ENCODE measurements at regions of chr10 and their contacts with region 1.

Region 1: GRCh38 chr10:67788025-67788886 is 49.7 kb downstream of the DNAJC12 start:
- DNase-seq: peak; percentile 14 to 74 (median 54)
- ATAC-seq: peak; percentile 64 to 79 (median 72)
- H3K4me3 ChIP-seq: no peak overlapping the region
- H3K4me3 Mint-ChIP-seq: peak overlapping the region in 2 of 3 donors; percentile 14 to 45
- H3K27ac ChIP-seq: no peak overlapping the region
- H3K27ac Mint-ChIP-seq: no peak overlapping the region
- H3K4me1 ChIP-seq: peaks cover 0 to 9% of the 10 kb centered on the region in 2 experiments
- H3K4me1 Mint-ChIP-seq: peaks cover 25 to 40% (median 26%) of the 10 kb centered on the region in 3 donors
- H3K27me3 ChIP-seq: no peaks in the 10 kb centered on the region
- H3K27me3 Mint-ChIP-seq: peaks cover 0 to 4% of the 10 kb centered on the region in 2 donors

Region 2: DNA sequence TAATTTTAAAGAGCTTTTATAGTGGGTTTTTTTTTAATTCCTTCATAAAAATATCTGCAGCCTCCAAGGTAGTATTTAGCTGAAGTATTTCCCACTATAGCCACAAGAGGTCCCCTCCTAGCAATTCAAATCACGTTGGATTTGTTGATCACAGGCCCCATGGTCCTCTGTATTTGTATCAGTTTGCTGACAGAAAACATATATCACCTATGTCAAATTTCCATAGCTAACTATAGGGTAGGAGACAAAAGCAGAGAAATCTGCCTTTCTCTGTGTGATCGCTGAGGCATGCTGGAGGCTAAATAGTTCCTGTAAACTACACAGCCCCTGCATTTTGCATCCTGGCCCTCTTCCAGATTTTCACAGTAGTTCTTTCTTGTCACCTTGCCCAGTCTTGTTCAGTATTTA is 90.5 kb before region 1 on chr10:
- CTCF ChIA-PET with region 1: interaction called, 18 to 103 read pairs
- POLR2A ChIA-PET with region 1: no interaction called
- DNase-seq: peak in 15 of 35 experiments; percentile 1 to 72 (median 9)
- ATAC-seq: peak; percentile 65 to 88 (median 77)
- H3K4me3 ChIP-seq: no peak overlapping the region
- H3K4me3 Mint-ChIP-seq: no peak overlapping the region
- H3K27ac ChIP-seq: no peak overlapping the region
- H3K27ac Mint-ChIP-seq: peak overlapping the region in 1 of 2 donors; percentile 34
- H3K4me1 ChIP-seq: peaks cover 0 to 7% of the 10 kb centered on the region in 2 experiments
- H3K4me1 Mint-ChIP-seq: peaks cover 8 to 14% (median 8%) of the 10 kb centered on the region in 3 donors
- H3K27me3 ChIP-seq: no peaks in the 10 kb centered on the region
- H3K27me3 Mint-ChIP-seq: peaks cover 31 to 36% of the 10 kb centered on the region in 2 donors

Measured in T-cell (primary cell).